ENCODE measurements at regions of chr17 and their contacts with region 1.

Region 1: DNA sequence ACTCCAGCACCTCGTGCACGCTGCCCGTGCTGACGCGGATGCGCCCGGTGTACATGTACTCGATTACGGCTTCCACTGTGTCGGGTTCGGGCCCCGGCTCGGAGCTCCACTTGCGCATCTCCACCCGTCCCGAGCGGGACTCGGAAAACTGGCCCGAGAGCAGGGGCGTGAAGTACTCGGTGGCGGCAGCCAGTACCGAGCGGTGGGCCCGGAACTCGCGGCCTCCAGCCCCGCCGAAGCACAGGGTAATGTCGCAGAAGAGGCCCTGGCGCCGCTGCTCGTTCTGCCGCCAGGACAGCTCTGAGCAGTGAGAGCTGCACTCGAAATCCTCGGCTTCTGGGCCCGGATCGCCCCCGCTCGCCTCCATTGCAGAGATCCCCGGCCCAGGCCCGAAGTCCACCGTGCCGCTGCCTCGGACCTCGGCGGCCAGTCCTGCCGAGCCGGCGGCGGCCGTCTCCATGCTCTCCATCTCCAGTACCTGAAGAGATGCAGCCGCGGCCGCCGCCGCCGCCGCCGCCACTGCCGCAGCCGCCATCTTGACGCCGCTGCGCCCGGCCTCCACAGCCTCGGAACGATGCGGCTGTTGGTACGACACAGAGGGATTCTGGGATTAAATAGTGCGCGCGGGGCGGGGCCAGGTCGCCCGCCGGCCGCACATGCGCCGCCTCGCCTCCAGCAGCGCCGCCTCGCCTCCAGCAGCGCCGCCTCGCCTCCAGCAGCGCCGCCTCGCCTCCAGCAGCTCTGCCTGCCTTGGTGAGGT is at the start of gene KLHL11:
- DNase-seq: peak; percentile 85 to 88 (median 87)
- H3K4me3 ChIP-seq: peak within 1 kb of the TSS; percentile 26 to 78
- H3K4me3 Mint-ChIP-seq: peak within 1 kb of the TSS in 1 of 8 donors; percentile 82
- H3K27ac ChIP-seq: peak within 1 kb of the TSS; percentile 71
- H3K27ac Mint-ChIP-seq: peak within 1 kb of the TSS in 3 of 7 donors; percentile 89 to 93 (median 92)
- H3K4me1 ChIP-seq: peaks cover 42% of the 10 kb centered on the region
- H3K4me1 Mint-ChIP-seq: peaks cover 11 to 37% (median 19%) of the 10 kb centered on the region in 4 donors
- H3K27me3 ChIP-seq: no peaks in the 10 kb centered on the region
- H3K27me3 Mint-ChIP-seq: no peaks in the 10 kb centered on the region
- total RNA-seq, gene KLHL11: 20.6 to 20.8 TPM

Region 2: DNA sequence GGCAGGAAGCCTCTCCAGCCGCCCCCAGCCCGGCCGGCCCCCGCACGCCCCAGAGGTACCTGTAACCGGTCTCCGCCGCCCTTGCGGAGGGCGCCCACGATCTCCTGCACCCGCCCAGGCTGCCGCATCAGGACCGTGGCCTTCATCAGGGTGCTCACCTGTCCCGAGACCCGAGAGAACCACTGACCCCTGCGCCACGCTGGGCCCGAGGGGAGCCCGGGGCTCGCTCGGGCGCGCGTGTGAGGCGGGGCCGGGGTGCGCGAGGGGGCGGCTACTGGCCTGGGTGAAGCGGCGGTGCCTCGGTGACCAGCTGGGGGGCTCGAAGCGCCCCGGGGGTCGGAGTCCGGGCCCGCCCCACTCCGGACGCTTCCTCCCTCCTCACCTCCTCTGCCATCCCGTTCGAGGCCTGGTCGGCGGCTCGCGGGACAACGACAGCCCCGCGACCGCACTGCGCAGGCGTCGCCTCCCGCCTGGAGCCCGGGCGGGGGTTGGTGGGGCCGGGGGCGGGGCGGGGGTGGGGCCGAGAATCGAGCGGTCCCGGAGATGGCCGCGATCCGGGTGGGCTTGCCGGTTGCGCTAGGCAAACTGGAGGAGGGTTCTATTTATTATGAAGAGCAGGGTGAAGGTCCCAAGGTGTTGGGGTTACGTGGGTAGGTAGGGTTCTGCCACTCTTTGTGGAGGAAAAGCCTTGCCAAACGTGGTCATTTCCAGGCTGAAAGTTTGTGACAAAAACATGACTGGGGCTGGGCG is 29.0 kb before region 1 on chr17 and contains the start of gene NT5C3B:
- CTCF ChIA-PET with region 1: no interaction called
- POLR2A ChIA-PET with region 1: interaction called, 24 read pairs
- intact Hi-C with region 1: no loop called
- DNase-seq: peak in 4 of 5 donors; percentile 35 to 58 (median 42)
- H3K4me3 ChIP-seq: peak within 1 kb of the TSS; percentile 29 to 51
- H3K4me3 Mint-ChIP-seq: peak within 1 kb of the TSS; percentile 79 to 90 (median 88)
- H3K27ac ChIP-seq: peak within 1 kb of the TSS; percentile 52
- H3K27ac Mint-ChIP-seq: peak within 1 kb of the TSS in 6 of 7 donors; percentile 41 to 89 (median 74)
- H3K4me1 ChIP-seq: peaks cover 12% of the 10 kb centered on the region
- H3K4me1 Mint-ChIP-seq: peaks cover 10 to 18% (median 14%) of the 10 kb centered on the region in 4 donors
- H3K27me3 ChIP-seq: no peaks in the 10 kb centered on the region
- H3K27me3 Mint-ChIP-seq: no peaks in the 10 kb centered on the region
- total RNA-seq, gene NT5C3B: 20.9 to 22.3 TPM

Region 3: GRCh38 chr17:41930009-41930832 is 65.2 kb after region 1 on chr17 and contains the start of gene ODAD4:
- CTCF ChIA-PET with region 1: no interaction called
- POLR2A ChIA-PET with region 1: interaction called, 11 read pairs
- intact Hi-C with region 1: loop called (anchors 1 kb)
- DNase-seq: peak; percentile 94 to 98 (median 98)
- H3K4me3 ChIP-seq: peak within 1 kb of the TSS; percentile 73 to 80
- H3K4me3 Mint-ChIP-seq: peak within 1 kb of the TSS; percentile 90 to 99 (median 98)
- H3K27ac ChIP-seq: peak within 1 kb of the TSS; percentile 85
- H3K27ac Mint-ChIP-seq: peak within 1 kb of the TSS; percentile 91 to 100 (median 99)
- H3K4me1 ChIP-seq: peaks cover 23% of the 10 kb centered on the region
- H3K4me1 Mint-ChIP-seq: peaks cover 16 to 35% (median 23%) of the 10 kb centered on the region in 4 donors
- H3K27me3 ChIP-seq: no peaks in the 10 kb centered on the region
- H3K27me3 Mint-ChIP-seq: no peaks in the 10 kb centered on the region
- total RNA-seq, gene ODAD4: 0.20 TPM in 1 of 2 experiments, not detected in the other